Activated CD4-positive, alpha-beta T cell treated with anti-CD3 and anti-CD28 coated beads, Interleukin-2, amount 10 ng/mL, durations not matched to agents 7 days and 5 days (primary cell): ENCODE measurements at regions of chr19 and their contacts with region 1.

Region 1: DNA sequence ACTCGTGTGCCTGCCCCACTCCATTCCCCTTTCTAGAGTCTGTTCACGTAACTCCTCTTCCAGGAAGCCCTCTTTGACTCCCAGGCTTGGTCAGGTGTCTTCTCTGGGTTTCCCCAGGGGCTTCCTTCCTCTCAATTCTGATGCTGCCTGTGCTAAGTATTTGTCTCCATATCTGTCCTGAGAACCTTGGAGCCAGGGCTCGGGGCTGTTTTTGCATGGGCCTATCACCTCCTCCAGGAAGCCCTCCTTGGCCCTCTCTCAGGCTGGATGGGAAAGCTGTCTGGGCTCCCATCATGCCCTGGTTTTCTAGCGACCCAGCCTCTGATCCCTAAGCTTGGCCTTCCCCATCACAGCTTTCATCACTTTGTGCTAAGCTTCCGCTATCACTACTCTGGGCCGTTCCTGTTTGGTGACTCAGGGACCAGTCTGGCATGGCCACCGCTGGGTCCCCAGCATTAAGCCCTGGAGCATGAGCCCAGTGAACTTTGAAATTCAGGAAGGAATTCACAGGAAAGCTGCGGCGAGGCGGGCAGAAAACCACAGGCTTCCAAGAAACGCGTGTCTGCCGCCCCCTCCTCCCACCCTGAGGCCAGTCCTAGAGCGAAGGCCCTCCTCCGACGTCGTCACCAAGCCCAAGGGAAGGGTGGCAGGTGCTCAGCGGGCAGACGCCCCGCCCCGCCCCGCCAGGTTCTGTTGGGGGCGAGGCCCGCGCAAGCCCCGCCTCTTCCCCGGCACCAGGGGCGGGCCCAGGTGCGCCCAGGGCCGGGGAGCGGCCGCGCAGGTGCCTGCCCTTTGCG is 486 bp upstream of the SPINT2 start:
- DNase-seq: no peak
- H3K4me3 Mint-ChIP-seq: peak overlapping the region; percentile 74
- H3K27ac Mint-ChIP-seq: peak overlapping the region; percentile 86
- H3K4me1 Mint-ChIP-seq: peaks cover 23% of the 10 kb centered on the region
- H3K27me3 Mint-ChIP-seq: peaks cover 1% of the 10 kb centered on the region

Region 2: GRCh38 chr19:38183251-38183897 is 80.5 kb before region 1 on chr19:
- CTCF ChIA-PET with region 1: no interaction called
- POLR2A ChIA-PET with region 1: no interaction called
- DNase-seq: no peak
- H3K4me3 Mint-ChIP-seq: no peak overlapping the region
- H3K27ac Mint-ChIP-seq: no peak overlapping the region
- H3K4me1 Mint-ChIP-seq: no peaks in the 10 kb centered on the region
- H3K27me3 Mint-ChIP-seq: no peaks in the 10 kb centered on the region

Region 3: DNA sequence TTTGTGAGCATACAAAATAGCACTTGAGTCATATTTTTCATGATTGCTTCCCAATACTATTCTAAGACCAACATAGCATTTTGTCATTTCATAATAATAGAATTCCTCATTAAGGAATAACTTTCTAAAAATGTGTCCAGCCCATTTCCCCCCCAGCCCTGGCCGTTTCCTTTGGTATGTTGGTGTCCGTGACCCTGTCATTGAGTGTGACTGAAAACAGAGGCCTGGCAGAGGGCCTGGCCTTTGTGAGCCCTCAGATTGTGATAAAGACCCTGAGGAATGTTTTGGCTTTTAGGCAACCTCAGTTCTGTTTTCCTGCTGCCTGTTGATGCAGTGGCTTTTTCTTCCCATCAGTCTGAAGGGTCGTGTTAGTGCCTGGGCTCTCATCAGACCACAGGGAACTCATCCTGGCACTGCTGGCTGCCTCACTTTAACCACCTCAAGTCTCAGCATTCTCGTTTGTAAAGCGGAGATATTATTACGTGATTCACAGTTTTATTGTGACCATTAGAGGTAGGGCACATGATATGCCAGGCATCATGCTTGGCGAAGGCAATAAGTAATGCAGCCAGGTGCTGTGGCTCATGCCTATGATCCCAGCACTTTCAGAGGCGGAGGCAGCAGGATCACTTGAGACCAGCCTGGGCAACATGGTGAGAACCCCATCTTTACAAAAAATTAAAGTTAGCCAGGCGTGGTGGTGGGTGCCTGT is 14.2 kb after region 1 on chr19:
- CTCF ChIA-PET with region 1: interaction called, 19 read pairs
- POLR2A ChIA-PET with region 1: interaction called, 3 read pairs
- DNase-seq: no peak
- H3K4me3 Mint-ChIP-seq: no peak overlapping the region
- H3K27ac Mint-ChIP-seq: no peak overlapping the region
- H3K4me1 Mint-ChIP-seq: peaks cover 13% of the 10 kb centered on the region
- H3K27me3 Mint-ChIP-seq: no peaks in the 10 kb centered on the region